ENCODE measurements at regions of chr16 and their contacts with region 1.

Region 1: DNA sequence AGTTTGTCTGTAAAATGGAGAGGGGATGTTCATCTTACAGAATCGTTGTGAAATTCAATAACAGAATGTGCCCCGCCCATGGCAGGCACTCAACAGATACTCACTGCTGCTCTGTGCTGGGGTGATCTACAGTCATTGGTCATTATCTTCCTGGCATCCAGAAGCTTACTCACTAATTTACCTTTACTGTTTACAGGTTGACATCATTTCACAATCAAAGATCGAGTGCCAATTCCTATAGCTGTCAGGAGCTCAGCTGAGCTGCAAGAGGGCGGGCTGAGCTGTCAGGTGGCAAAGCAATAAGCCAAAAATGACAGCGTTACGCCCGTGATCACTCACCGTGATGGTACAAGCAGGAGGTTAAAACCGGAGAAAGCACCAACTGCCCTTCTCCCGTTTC is 51.2 kb downstream of the LITAF start:
- DNase-seq: no peak
- H3K4me3 ChIP-seq: no peak overlapping the region
- H3K27ac ChIP-seq: no peak overlapping the region
- H3K4me1 ChIP-seq: no peaks in the 10 kb centered on the region; a peak in 1 of 4 replicates
- H3K27me3 ChIP-seq: no peaks in the 10 kb centered on the region
- CTCF ChIP-seq: no peak
- EP300 ChIP-seq: no peak
- RAD21 ChIP-seq: no peak

Region 2: GRCh38 chr16:11497851-11498289 is 37.6 kb before region 1 on chr16:
- CTCF ChIA-PET with region 1: interaction called, 10 read pairs
- POLR2A ChIA-PET with region 1: no interaction called
- DNase-seq: no peak
- H3K4me3 ChIP-seq: no peak overlapping the region
- H3K27ac ChIP-seq: peak overlapping the region; percentile 92 to 94
- H3K4me1 ChIP-seq: peaks cover 32 to 45% of the 10 kb centered on the region in 2 experiments
- H3K27me3 ChIP-seq: no peaks in the 10 kb centered on the region
- CTCF ChIP-seq: no peak
- EP300 ChIP-seq: no peak
- RAD21 ChIP-seq: no peak

Region 3: GRCh38 chr16:11515540-11516430 is 19.7 kb before region 1 on chr16:
- CTCF ChIA-PET with region 1: interaction called, 10 read pairs
- POLR2A ChIA-PET with region 1: no interaction called
- DNase-seq: no peak
- H3K4me3 ChIP-seq: no peak overlapping the region
- H3K27ac ChIP-seq: no peak overlapping the region
- H3K4me1 ChIP-seq: peaks cover 0 to 6% of the 10 kb centered on the region in 2 experiments; a peak in 1 of 4 replicates
- H3K27me3 ChIP-seq: no peaks in the 10 kb centered on the region
- CTCF ChIP-seq: no peak
- EP300 ChIP-seq: no peak
- RAD21 ChIP-seq: no peak

Region 4: DNA sequence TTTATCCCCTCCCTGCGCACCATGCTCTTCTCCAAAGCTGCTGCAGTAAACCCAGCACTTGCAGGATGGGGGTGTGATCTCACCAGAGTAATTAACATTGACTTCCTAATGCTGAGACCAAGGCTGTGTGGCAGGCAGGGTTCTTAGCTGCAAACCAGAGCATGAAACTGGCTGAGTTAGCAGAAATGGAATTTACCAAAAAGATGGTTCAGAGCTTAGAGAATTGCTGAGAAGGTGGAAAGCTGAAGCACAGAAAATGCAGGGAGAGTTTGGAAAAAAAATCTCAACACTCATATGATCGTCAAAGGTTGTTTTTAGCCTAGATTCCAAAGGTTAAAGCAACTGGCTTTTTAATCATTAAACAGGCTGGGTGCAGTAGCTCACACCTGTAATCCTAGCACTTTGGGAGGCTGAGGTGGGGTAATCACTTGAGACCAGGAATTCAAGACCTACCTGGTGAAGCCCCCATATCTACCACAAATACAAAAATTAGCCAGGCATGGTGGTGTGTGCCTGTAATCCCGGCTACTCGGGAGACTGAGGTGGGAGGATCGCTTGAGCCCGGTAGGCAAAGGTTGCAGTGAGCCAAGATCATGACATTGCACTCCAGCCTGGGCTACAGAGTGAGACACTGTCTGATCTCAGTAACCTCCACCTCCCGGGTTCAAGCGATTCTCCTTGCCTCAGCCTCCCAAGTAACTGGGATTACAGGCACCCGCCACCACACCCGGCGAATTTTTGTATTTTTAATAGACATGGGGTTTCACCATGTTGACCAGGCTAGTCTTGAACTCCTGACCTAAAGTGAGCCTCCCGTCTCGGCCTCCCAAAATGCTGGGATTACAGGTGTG is 213.2 kb after region 1 on chr16:
- CTCF ChIA-PET with region 1: no interaction called
- POLR2A ChIA-PET with region 1: no interaction called
- DNase-seq: no peak
- H3K4me3 ChIP-seq: no peak overlapping the region
- H3K27ac ChIP-seq: no peak overlapping the region
- H3K4me1 ChIP-seq: peaks cover 0 to under 1% of the 10 kb centered on the region in 2 experiments; a peak in 2 of 4 replicates
- H3K27me3 ChIP-seq: no peaks in the 10 kb centered on the region
- CTCF ChIP-seq: no peak
- EP300 ChIP-seq: no peak
- RAD21 ChIP-seq: no peak

Measured in SK-N-SH (cell line).